Right cardiac atrium (tissue), 5 donors: ENCODE measurements at regions of chr9 and their contacts with region 1.

Region 1: DNA sequence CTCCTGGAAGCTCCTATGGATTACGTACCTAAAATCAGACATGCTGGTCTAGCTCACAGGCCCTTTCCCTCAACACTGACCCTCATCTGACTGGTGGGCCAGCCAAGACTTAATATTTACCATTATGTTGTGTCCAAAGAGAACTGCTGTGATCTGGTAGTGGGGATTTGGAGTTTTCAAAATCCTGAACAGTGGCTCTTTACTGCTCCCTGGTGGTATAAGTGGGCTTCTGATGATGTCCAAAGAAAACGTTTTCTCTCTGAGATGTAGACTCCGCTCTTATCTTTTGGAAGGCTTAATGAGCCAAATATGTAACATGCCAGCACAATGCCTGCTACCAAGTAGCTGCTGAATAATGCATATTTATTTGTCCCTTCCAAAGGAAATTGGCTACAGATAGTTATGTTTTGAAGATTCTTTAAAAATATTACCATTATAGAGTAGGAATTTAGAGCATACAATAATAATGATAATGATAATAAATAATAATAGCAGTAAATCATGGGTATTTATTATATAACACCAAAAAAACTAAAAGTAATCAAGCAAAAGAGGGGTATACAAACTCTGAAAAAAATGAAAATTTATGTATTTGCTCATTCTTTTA is 406.6 kb upstream of the TNC start:
- DNase-seq: no peak
- ATAC-seq: peak; percentile 76 to 80
- H3K4me3 ChIP-seq: no peak overlapping the region
- H3K27ac ChIP-seq: no peak overlapping the region
- H3K4me1 ChIP-seq: peaks cover 2% of the 10 kb centered on the region
- H3K27me3 ChIP-seq: no peaks in the 10 kb centered on the region

Region 2: GRCh38 chr9:114738581-114739316 is 785.8 kb before region 1 on chr9:
- intact Hi-C with region 1: loop called in 1 of 4 experiments (anchors 5 kb)
- DNase-seq: peak; percentile 54 to 70 (median 70)
- ATAC-seq: peak; percentile 85 to 94
- H3K4me3 ChIP-seq: no peak overlapping the region
- H3K27ac ChIP-seq: no peak overlapping the region
- H3K4me1 ChIP-seq: no peaks in the 10 kb centered on the region
- H3K27me3 ChIP-seq: no peaks in the 10 kb centered on the region

Region 3: GRCh38 chr9:115466756-115467155 is 57.8 kb before region 1 on chr9:
- intact Hi-C with region 1: loop called in 1 of 4 experiments (anchors 10 kb)
- DNase-seq: peak; percentile 54 to 77 (median 68)
- ATAC-seq: peak; percentile 93 to 97
- H3K4me3 ChIP-seq: no peak overlapping the region
- H3K27ac ChIP-seq: peak overlapping the region; percentile 45
- H3K4me1 ChIP-seq: no peaks in the 10 kb centered on the region
- H3K27me3 ChIP-seq: no peaks in the 10 kb centered on the region